ENCODE measurements at regions of chr14 and their contacts with region 1.

Region 1: DNA sequence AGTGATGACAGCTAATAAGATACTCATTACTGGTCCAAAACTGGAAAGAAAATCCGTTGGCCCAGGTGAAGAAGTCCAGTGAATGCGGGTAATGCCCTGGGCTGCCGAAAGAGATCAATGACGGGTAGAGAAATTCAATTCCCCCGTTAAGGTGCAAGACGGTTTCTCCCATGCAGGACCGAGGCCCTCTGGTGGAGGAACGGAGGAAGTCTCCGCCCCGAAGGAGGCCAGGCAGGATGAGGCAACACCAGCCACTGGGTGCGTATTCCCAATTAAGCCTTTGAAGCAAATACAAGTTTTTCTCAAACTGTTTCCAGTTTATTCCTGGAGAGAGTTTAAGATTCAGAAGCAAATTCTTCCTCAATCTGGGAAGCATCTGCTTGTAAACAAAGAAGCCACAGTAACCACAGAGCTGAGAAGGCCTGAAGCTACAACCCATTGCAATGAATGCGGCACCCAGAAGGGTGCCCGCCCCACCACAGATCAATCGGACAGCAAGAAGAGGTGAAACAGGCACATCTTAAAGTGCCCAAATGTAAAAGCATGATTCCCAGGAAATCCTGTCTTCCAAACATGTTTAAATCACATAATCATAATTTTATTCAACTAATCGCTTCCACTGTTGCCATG is 118.5 kb downstream of the TTC7B start:
- DNase-seq: no peak
- ATAC-seq: peak; percentile 99
- H3K4me3 ChIP-seq: no peak overlapping the region
- H3K27ac ChIP-seq: no peak overlapping the region
- H3K4me1 ChIP-seq: no peaks in the 10 kb centered on the region
- H3K27me3 ChIP-seq: no peaks in the 10 kb centered on the region
- CTCF ChIP-seq: peak; percentile 89 to 95 (median 91)
- EP300 ChIP-seq: no peak
- POLR2A ChIP-seq: no peak
- RAD21 ChIP-seq: peak; percentile 88

Region 2: DNA sequence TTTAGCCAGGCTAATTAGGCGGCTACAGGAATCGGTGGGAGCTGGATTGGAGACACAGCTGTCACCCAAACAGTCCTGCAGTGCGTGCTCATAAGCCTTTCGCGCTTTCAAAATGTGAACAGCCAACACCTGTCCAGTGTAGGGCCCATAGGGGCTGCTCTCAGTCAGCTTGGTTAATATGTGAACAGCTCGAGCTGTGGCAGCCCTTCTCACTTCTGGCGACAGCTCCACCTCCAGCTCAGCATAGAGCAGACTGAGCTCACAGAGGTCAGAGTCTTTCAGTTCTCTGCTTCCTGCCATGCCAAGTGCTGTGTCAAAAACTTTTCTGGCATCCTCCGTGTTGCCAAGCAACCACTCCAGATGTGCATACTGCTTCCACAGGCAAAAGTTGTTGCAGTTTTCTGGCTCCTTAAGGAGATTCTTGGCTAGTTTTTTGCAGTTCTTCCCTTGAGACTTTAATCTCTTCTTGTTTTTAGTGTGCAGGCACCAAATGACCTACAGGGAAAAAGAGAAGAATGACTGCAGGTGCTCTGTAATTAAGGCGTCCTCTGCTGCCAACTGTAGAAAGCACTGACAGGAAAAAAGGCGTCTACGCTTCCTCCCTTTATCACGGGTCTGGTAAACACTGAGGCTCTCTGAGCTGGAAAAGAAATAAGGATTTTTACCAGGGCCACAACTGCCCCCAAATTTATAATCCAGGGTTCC is 408.9 kb before region 1 on chr14:
- CTCF ChIA-PET with region 1: interaction called, 4 read pairs
- POLR2A ChIA-PET with region 1: no interaction called
- RAD21 ChIA-PET with region 1: interaction called, 4 read pairs
- SMC1A ChIA-PET with region 1: no interaction called
- in situ Hi-C with region 1: no loop called
- intact Hi-C with region 1: loop called (anchors 2 kb)
- DNase-seq: no peak
- ATAC-seq: peak; percentile 77
- H3K4me3 ChIP-seq: no peak overlapping the region
- H3K27ac ChIP-seq: no peak overlapping the region
- H3K4me1 ChIP-seq: no peaks in the 10 kb centered on the region
- H3K27me3 ChIP-seq: no peaks in the 10 kb centered on the region
- CTCF ChIP-seq: no peak
- EP300 ChIP-seq: no peak
- POLR2A ChIP-seq: no peak
- RAD21 ChIP-seq: no peak

Region 3: GRCh38 chr14:90301668-90302090 is 396.0 kb before region 1 on chr14:
- CTCF ChIA-PET with region 1: interaction called, 21 read pairs
- POLR2A ChIA-PET with region 1: no interaction called
- RAD21 ChIA-PET with region 1: interaction called, 6 read pairs
- SMC1A ChIA-PET with region 1: interaction called, 5 read pairs
- in situ Hi-C with region 1: loop called (anchors 10 kb)
- intact Hi-C with region 1: loop called (anchors 5 kb)
- DNase-seq: no peak
- ATAC-seq: peak; percentile 55; the same call in 2 of the 3 replicates
- H3K4me3 ChIP-seq: no peak overlapping the region
- H3K27ac ChIP-seq: no peak overlapping the region
- H3K4me1 ChIP-seq: no peaks in the 10 kb centered on the region
- H3K27me3 ChIP-seq: no peaks in the 10 kb centered on the region
- CTCF ChIP-seq: peak; percentile 12 to 47 (median 26); a peak in 3 of 6 replicates
- EP300 ChIP-seq: no peak
- POLR2A ChIP-seq: no peak
- RAD21 ChIP-seq: peak; percentile 65

Region 4: GRCh38 chr14:90671382-90672234 is 26.1 kb before region 1 on chr14:
- CTCF ChIA-PET with region 1: no interaction called
- POLR2A ChIA-PET with region 1: no interaction called
- RAD21 ChIA-PET with region 1: no interaction called
- SMC1A ChIA-PET with region 1: no interaction called
- in situ Hi-C with region 1: no loop called
- intact Hi-C with region 1: no loop called
- DNase-seq: no peak
- ATAC-seq: no peak
- H3K4me3 ChIP-seq: no peak overlapping the region
- H3K27ac ChIP-seq: no peak overlapping the region
- H3K4me1 ChIP-seq: no peaks in the 10 kb centered on the region
- H3K27me3 ChIP-seq: no peaks in the 10 kb centered on the region
- CTCF ChIP-seq: no peak
- EP300 ChIP-seq: no peak
- POLR2A ChIP-seq: no peak
- RAD21 ChIP-seq: no peak

Region 5: DNA sequence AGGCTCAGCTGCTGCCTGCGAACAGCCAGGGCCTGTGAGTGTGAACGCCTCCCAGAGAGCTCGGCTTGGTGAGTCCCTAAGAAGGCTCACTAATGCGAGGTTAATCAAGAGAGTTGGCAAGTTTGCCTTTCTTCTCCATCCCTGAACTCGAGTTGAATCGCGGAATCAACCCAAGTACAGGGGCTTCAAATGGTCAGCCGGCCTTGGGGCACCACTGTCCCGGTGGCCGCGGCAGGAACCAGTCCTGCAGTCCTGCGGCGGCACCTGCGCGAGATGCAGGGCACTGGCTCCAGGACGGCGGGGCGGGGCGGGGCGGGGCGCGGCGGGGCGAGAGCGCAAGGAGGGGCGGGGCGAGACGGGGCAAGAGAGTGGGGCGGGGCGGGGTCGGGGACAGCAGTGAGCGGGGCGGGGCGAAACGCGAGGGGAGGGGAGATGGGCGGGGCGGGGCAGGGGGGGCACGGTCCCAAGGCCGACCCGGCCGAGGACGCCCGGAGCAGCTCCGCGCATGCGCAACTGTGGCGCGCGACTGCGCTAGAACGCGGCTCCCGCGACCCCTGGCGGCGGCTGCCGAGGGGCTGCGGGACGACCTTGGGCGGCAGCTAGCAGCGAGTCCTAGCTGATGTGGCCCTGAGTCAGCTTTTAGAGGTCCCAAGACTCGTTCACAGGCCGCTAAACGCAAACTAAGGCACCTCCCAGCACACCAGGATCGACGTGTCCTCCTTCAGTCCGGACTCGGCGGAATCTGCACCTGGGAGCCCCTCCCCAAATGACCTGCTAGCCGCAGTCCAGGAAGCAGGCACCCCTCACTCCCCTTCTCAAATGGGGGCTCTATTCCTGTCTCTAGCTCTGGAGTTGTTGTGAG is 60.6 kb after region 1 on chr14:
- CTCF ChIA-PET with region 1: interaction called, 17 read pairs
- POLR2A ChIA-PET with region 1: no interaction called
- RAD21 ChIA-PET with region 1: interaction called, 6 read pairs
- SMC1A ChIA-PET with region 1: no interaction called
- in situ Hi-C with region 1: no loop called
- intact Hi-C with region 1: no loop called
- DNase-seq: peak; percentile 62
- ATAC-seq: peak; percentile 98
- H3K4me3 ChIP-seq: peak overlapping the region; percentile 63
- H3K27ac ChIP-seq: peak overlapping the region; percentile 42
- H3K4me1 ChIP-seq: peaks cover 6% of the 10 kb centered on the region
- H3K27me3 ChIP-seq: no peaks in the 10 kb centered on the region; a peak in 1 of 4 replicates
- CTCF ChIP-seq: peak; percentile 76 to 91 (median 87)
- EP300 ChIP-seq: no peak
- POLR2A ChIP-seq: peak; percentile 83
- RAD21 ChIP-seq: peak; percentile 48

Measured in GM12878 (cell line).